CD4-positive, alpha-beta T cell (primary cell): ENCODE measurements at regions of chr9 and their contacts with region 1.

Region 1: GRCh38 chr9:128818099-128818838 is at the start of gene ENDOG:
- DNase-seq: peak; percentile 92 to 98 (median 97)
- ATAC-seq: peak; percentile 95
- H3K4me3 ChIP-seq: peak within 1 kb of the TSS; percentile 65
- H3K4me3 Mint-ChIP-seq: peak within 1 kb of the TSS; percentile 93
- H3K27ac ChIP-seq: peak within 1 kb of the TSS; percentile 34 to 53
- H3K27ac Mint-ChIP-seq: peak within 1 kb of the TSS; percentile 89
- H3K4me1 ChIP-seq: peaks cover 23% of the 10 kb centered on the region
- H3K4me1 Mint-ChIP-seq: peaks cover 11% of the 10 kb centered on the region
- H3K27me3 ChIP-seq: no peaks in the 10 kb centered on the region
- H3K27me3 Mint-ChIP-seq: no peaks in the 10 kb centered on the region
- CTCF ChIP-seq: peak; percentile 96
- total RNA-seq, gene ENDOG: 3.2 to 3.7 TPM

Region 2: GRCh38 chr9:128656416-128657343 is 161.6 kb before region 1 on chr9 and contains the start of gene DYNC2I2:
- CTCF ChIA-PET with region 1: no interaction called
- POLR2A ChIA-PET with region 1: interaction called, 3 read pairs
- intact Hi-C with region 1: loop called in 1 of 2 experiments (anchors 5 kb)
- DNase-seq: peak; percentile 94 to 99 (median 96)
- ATAC-seq: peak; percentile 98
- H3K4me3 ChIP-seq: peak within 1 kb of the TSS; percentile 64
- H3K4me3 Mint-ChIP-seq: peak within 1 kb of the TSS; percentile 96
- H3K27ac ChIP-seq: peak within 1 kb of the TSS; percentile 94 to 96
- H3K27ac Mint-ChIP-seq: peak within 1 kb of the TSS; percentile 95
- H3K4me1 ChIP-seq: peaks cover 13% of the 10 kb centered on the region
- H3K4me1 Mint-ChIP-seq: peaks cover 8% of the 10 kb centered on the region
- H3K27me3 ChIP-seq: no peaks in the 10 kb centered on the region
- H3K27me3 Mint-ChIP-seq: no peaks in the 10 kb centered on the region
- CTCF ChIP-seq: no peak
- total RNA-seq, gene DYNC2I2: 2.2 to 3.2 TPM

Region 3: DNA sequence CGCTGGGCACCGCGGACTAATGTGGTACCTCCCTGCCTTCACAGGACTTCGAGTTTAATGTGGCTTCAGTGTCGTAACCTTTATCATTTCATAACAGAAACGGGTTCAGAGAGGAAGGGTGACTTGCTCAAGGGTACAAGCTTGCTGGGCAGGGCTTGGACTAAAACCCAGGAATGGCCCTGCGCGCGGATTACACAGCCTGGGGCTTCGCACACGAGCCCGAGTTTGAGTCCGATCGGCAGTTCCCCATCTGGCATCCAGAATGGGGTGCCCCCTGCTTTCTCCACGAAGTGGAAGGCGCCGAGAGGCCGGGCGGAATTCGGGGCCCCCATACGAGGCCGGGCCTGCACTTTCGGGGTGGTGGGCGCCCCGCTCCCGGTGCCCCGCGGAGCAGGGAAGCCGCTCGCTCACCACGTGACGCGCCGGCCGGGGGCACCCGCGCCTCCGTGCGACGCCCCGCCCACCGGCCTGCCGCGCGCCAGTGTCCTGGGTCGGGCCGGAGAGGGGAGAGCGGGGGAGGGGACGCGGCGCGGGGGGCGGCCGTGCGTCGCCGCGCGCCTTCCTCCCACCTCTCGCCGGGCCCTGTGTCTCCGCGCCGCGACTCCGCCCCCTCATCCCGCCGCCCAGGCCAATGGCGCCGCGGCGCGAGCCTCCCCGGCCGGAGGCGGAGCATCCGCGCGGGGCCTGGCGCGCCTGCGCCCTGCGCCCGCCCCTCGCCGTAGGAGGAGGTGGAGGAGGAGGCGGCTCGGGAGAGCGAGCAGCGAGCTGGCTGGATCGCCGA is 129.6 kb before region 1 on chr9 and contains the start of gene SET:
- CTCF ChIA-PET with region 1: interaction called, 7 read pairs
- POLR2A ChIA-PET with region 1: interaction called, 13 read pairs
- intact Hi-C with region 1: no loop called
- DNase-seq: peak; percentile 82 to 97 (median 92)
- ATAC-seq: peak; percentile 78
- H3K4me3 ChIP-seq: peak within 1 kb of the TSS; percentile 89
- H3K4me3 Mint-ChIP-seq: peak within 1 kb of the TSS; percentile 95
- H3K27ac ChIP-seq: peak within 1 kb of the TSS; percentile 84
- H3K27ac Mint-ChIP-seq: peak within 1 kb of the TSS; percentile 94
- H3K4me1 ChIP-seq: peaks cover 58% of the 10 kb centered on the region
- H3K4me1 Mint-ChIP-seq: peaks cover 59% of the 10 kb centered on the region
- H3K27me3 ChIP-seq: no peaks in the 10 kb centered on the region
- H3K27me3 Mint-ChIP-seq: no peaks in the 10 kb centered on the region
- CTCF ChIP-seq: no peak
- total RNA-seq, gene SET: 228 to 241 TPM

Region 4: DNA sequence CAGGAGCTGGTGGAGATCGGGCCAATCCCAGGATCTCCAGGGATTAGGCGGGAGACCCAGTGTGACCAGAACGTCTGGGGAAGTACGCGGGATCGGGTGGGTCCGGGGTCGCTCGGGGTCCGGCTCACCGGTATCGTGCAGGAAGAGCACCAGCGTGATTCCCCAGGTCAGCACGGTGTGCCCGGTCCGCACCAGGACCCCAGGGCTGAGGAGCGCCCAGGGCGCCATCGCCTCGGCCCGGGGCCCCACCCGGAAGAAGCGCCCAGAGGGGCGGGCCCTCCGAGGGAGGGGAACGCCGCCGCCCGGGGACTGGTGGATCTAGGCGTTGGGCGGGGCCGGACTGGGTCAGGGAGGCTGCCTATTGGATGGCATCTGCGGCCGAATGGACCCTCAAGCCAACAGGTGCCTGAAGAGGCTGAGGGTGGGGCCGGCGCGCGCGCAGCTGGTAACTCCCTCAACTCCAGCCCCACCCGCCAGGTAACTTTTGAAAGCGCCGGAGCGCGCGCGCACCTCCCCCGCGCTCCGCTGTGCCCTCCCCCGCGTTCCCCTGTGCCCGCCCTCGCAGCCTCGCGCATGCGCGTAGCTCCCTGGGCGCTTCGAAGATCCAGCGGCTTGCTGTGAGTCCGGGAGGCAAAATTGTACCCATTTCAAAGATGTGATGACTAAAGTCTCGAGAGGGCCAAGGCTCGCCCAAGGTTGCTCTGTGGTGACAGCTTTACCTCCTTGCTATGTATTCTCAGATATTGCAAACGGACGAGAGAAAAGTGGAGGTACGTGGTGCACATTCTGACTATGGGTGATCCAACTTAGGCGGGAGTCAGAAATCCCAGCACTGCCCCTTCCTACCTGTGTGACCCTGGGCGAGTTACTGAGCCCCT is 94.2 kb before region 1 on chr9 and contains the start of gene ZDHHC12:
- CTCF ChIA-PET with region 1: interaction called, 4 read pairs
- POLR2A ChIA-PET with region 1: interaction called, 29 read pairs
- intact Hi-C with region 1: no loop called
- DNase-seq: peak; percentile 97 to 100 (median 99)
- ATAC-seq: peak; percentile 96
- H3K4me3 ChIP-seq: peak within 1 kb of the TSS; percentile 90
- H3K4me3 Mint-ChIP-seq: peak within 1 kb of the TSS; percentile 95
- H3K27ac ChIP-seq: peak within 1 kb of the TSS; percentile 70 to 72
- H3K27ac Mint-ChIP-seq: peak within 1 kb of the TSS; percentile 86
- H3K4me1 ChIP-seq: peaks cover 53% of the 10 kb centered on the region
- H3K4me1 Mint-ChIP-seq: peaks cover 33% of the 10 kb centered on the region
- H3K27me3 ChIP-seq: no peaks in the 10 kb centered on the region
- H3K27me3 Mint-ChIP-seq: no peaks in the 10 kb centered on the region
- CTCF ChIP-seq: no peak
- total RNA-seq, gene ZDHHC12: 22.0 to 23.7 TPM

Region 5: GRCh38 chr9:128786681-128787601 is 31.3 kb before region 1 on chr9 and contains the start of gene TBC1D13:
- CTCF ChIA-PET with region 1: interaction called, 6 read pairs
- POLR2A ChIA-PET with region 1: interaction called, 4 read pairs
- intact Hi-C with region 1: loop called in 1 of 2 experiments (anchors 2 kb)
- DNase-seq: peak; percentile 82 to 95 (median 87)
- ATAC-seq: peak; percentile 92
- H3K4me3 ChIP-seq: peak within 1 kb of the TSS; percentile 79
- H3K4me3 Mint-ChIP-seq: peak within 1 kb of the TSS; percentile 96
- H3K27ac ChIP-seq: peak within 1 kb of the TSS; percentile 67 to 77
- H3K27ac Mint-ChIP-seq: peak within 1 kb of the TSS; percentile 99
- H3K4me1 ChIP-seq: peaks cover 23% of the 10 kb centered on the region
- H3K4me1 Mint-ChIP-seq: peaks cover 25% of the 10 kb centered on the region
- H3K27me3 ChIP-seq: no peaks in the 10 kb centered on the region
- H3K27me3 Mint-ChIP-seq: no peaks in the 10 kb centered on the region
- CTCF ChIP-seq: no peak
- total RNA-seq, gene TBC1D13: 25.4 to 28.7 TPM

Region 6: DNA sequence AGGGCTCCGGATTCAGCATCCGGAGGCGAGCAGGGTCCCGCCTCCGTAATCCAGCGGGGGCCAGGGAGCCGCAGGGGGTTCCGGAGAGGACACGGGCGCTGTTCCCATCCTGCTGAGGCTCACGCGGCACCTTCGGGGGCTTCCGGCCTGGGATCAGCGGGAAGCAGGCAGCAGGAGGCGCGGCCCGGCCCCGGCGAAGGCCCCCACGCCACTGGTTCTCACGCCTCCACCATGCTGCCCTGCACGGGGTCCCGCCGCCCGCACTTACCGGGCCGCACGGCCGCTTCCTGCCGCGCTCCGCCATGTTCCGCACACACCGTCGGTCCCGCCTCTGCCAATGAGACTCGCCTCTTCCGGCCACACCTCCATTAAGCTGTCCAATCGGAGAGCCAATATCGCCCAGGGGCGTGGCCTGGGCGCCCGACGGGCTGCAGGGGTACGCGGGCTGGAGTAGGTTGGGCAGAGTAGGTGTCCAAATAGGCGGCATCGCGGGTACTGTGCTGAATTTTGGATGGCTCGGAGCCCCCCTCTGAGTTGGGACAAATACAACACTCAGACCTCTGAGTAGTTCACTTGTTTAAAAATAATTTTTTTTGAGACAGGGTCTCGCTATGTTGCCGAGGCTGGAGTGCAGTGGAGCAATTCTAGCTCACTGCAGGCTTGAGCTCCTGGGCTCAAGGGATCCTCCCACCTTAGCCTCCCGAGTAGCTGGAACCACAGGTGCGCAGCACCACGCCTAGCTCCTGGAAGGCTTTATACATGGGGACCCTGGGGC is 11.4 kb after region 1 on chr9 and contains the start of gene SPOUT1:
- CTCF ChIA-PET with region 1: interaction called, 44 read pairs
- POLR2A ChIA-PET with region 1: interaction called, 61 read pairs
- intact Hi-C with region 1: loop called (anchors 1 kb)
- DNase-seq: peak; percentile 84 to 96 (median 92)
- ATAC-seq: peak; percentile 98
- H3K4me3 ChIP-seq: peak within 1 kb of the TSS; percentile 94
- H3K4me3 Mint-ChIP-seq: peak within 1 kb of the TSS; percentile 99
- H3K27ac ChIP-seq: peak within 1 kb of the TSS; percentile 49 to 54
- H3K27ac Mint-ChIP-seq: peak within 1 kb of the TSS; percentile 87
- H3K4me1 ChIP-seq: peaks cover 21% of the 10 kb centered on the region
- H3K4me1 Mint-ChIP-seq: peaks cover 19% of the 10 kb centered on the region
- H3K27me3 ChIP-seq: no peaks in the 10 kb centered on the region
- H3K27me3 Mint-ChIP-seq: no peaks in the 10 kb centered on the region
- CTCF ChIP-seq: no peak
- total RNA-seq, gene SPOUT1: 22.2 to 27.6 TPM

Region 7: GRCh38 chr9:128902351-128903078 is 84.2 kb after region 1 on chr9:
- CTCF ChIA-PET with region 1: interaction called, 3 read pairs
- POLR2A ChIA-PET with region 1: interaction called, 11 read pairs
- intact Hi-C with region 1: loop called in 1 of 2 experiments (anchors 1 kb)
- DNase-seq: peak; percentile 79 to 95 (median 90)
- ATAC-seq: peak; percentile 93
- H3K4me3 ChIP-seq: peak overlapping the region; percentile 45
- H3K4me3 Mint-ChIP-seq: peak overlapping the region; percentile 81
- H3K27ac ChIP-seq: peak overlapping the region; percentile 95 to 96
- H3K27ac Mint-ChIP-seq: peak overlapping the region; percentile 95
- H3K4me1 ChIP-seq: peaks cover 82% of the 10 kb centered on the region
- H3K4me1 Mint-ChIP-seq: peaks cover 74% of the 10 kb centered on the region
- H3K27me3 ChIP-seq: no peaks in the 10 kb centered on the region
- H3K27me3 Mint-ChIP-seq: no peaks in the 10 kb centered on the region
- CTCF ChIP-seq: no peak